CD4-positive, alpha-beta T cell (primary cell): ENCODE measurements at regions of chr15 and their contacts with region 1.

Region 1: DNA sequence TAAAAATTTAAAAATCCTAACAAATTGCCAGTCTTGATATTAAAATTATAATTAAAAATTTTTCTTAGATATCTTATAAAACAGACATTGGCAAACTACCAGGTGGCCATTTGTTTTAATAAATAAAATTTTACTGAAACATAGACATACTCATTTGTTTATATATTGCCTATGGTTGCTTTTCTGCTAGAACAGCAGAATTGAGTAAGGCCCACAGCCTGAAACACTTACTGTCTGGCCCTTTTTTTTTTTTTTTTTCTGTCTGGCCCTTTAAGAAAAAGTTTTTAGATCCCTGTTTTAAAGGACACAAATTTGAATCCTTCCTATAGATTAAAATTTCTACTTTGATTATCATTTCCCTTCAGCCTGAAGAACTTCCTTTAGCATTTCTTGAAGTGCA is 60.5 kb upstream of the CTDSPL2 start:
- DNase-seq: no peak
- ATAC-seq: no peak
- H3K4me3 ChIP-seq: no peak overlapping the region
- H3K4me3 Mint-ChIP-seq: no peak overlapping the region
- H3K27ac ChIP-seq: no peak overlapping the region
- H3K27ac Mint-ChIP-seq: no peak overlapping the region
- H3K4me1 ChIP-seq: no peaks in the 10 kb centered on the region
- H3K4me1 Mint-ChIP-seq: no peaks in the 10 kb centered on the region
- H3K27me3 ChIP-seq: no peaks in the 10 kb centered on the region
- H3K27me3 Mint-ChIP-seq: no peaks in the 10 kb centered on the region
- CTCF ChIP-seq: no peak

Region 2: DNA sequence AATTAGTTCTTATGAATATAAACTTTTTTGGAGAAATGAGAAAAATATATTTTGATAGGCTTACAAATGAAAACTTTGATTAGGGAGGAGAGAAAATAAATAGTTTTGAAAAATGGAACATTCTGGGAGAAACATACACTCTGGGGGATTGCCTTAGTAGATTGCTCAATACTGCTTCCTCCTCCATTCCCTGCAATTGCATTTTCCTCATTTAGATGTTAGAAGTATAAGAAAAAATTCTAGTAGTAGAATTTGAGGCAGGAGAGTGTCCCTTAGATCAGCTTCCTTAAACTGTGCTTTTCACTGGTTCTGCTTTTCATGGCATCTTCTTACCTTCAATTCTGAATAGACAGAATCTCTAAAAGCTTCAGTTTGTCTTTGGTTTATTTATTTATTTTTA is 14.3 kb after region 1 on chr15:
- CTCF ChIA-PET with region 1: no interaction called
- POLR2A ChIA-PET with region 1: no interaction called
- intact Hi-C with region 1: no loop called
- DNase-seq: no peak
- ATAC-seq: no peak
- H3K4me3 ChIP-seq: no peak overlapping the region
- H3K4me3 Mint-ChIP-seq: no peak overlapping the region
- H3K27ac ChIP-seq: no peak overlapping the region
- H3K27ac Mint-ChIP-seq: no peak overlapping the region
- H3K4me1 ChIP-seq: no peaks in the 10 kb centered on the region
- H3K4me1 Mint-ChIP-seq: no peaks in the 10 kb centered on the region
- H3K27me3 ChIP-seq: no peaks in the 10 kb centered on the region
- H3K27me3 Mint-ChIP-seq: no peaks in the 10 kb centered on the region
- CTCF ChIP-seq: no peak

Region 3: GRCh38 chr15:44394062-44394461 is 27.1 kb after region 1 on chr15:
- CTCF ChIA-PET with region 1: interaction called, 3 read pairs
- POLR2A ChIA-PET with region 1: no interaction called
- intact Hi-C with region 1: loop called in 1 of 2 experiments (anchors 2 kb)
- DNase-seq: no peak
- ATAC-seq: no peak
- H3K4me3 ChIP-seq: no peak overlapping the region
- H3K4me3 Mint-ChIP-seq: no peak overlapping the region
- H3K27ac ChIP-seq: no peak overlapping the region
- H3K27ac Mint-ChIP-seq: no peak overlapping the region
- H3K4me1 ChIP-seq: no peaks in the 10 kb centered on the region
- H3K4me1 Mint-ChIP-seq: peaks cover 7% of the 10 kb centered on the region
- H3K27me3 ChIP-seq: no peaks in the 10 kb centered on the region
- H3K27me3 Mint-ChIP-seq: no peaks in the 10 kb centered on the region
- CTCF ChIP-seq: no peak

Region 4: GRCh38 chr15:44633603-44634002 is 266.6 kb after region 1 on chr15:
- CTCF ChIA-PET with region 1: no interaction called
- POLR2A ChIA-PET with region 1: no interaction called
- intact Hi-C with region 1: no loop called
- DNase-seq: no peak
- ATAC-seq: no peak
- H3K4me3 ChIP-seq: no peak overlapping the region
- H3K4me3 Mint-ChIP-seq: no peak overlapping the region
- H3K27ac ChIP-seq: no peak overlapping the region
- H3K27ac Mint-ChIP-seq: no peak overlapping the region
- H3K4me1 ChIP-seq: no peaks in the 10 kb centered on the region
- H3K4me1 Mint-ChIP-seq: peaks cover 14% of the 10 kb centered on the region
- H3K27me3 ChIP-seq: no peaks in the 10 kb centered on the region
- H3K27me3 Mint-ChIP-seq: no peaks in the 10 kb centered on the region
- CTCF ChIP-seq: no peak